ENCODE measurements at regions of chr16 and their contacts with region 1.

Region 1: DNA sequence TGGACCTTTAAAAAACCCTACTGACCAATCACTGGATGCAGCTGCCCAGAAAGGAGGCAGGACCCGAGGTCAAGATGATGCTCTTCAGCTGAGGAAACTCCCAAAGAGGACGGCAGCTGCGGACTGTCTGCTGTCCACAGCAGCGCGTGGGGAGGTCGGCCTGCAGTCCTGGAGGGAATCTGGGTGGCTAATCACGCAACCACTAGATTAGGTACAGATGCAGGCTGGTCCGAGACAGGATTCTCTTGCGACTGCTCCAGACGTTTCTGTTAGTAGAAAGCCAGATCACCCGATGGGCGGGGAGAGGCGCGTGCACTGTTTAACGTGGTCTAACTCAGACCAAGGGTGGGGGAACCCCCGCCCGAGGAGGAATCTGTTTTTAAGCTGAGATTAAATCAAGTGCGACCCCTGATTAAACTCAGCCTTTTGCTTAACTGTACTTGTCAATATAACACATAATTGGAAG is 8.8 kb downstream of the CTRB2 start:
- DNase-seq: peak; percentile 61
- H3K4me3 ChIP-seq: peak overlapping the region; percentile 22
- H3K27ac ChIP-seq: peak overlapping the region; percentile 21
- H3K27me3 ChIP-seq: peaks cover 8% of the 10 kb centered on the region
- CTCF ChIP-seq: no peak

Region 2: GRCh38 chr16:75219838-75220237 is 21.7 kb after region 1 on chr16:
- CTCF ChIA-PET with region 1: interaction called, 14 read pairs
- POLR2A ChIA-PET with region 1: no interaction called
- DNase-seq: no peak
- H3K4me3 ChIP-seq: no peak overlapping the region
- H3K27ac ChIP-seq: no peak overlapping the region
- H3K27me3 ChIP-seq: no peaks in the 10 kb centered on the region
- CTCF ChIP-seq: no peak

Region 3: GRCh38 chr16:75340741-75341491 is 142.7 kb after region 1 on chr16:
- CTCF ChIA-PET with region 1: interaction called, 12 read pairs
- POLR2A ChIA-PET with region 1: no interaction called
- DNase-seq: no peak
- H3K4me3 ChIP-seq: no peak overlapping the region
- H3K27ac ChIP-seq: no peak overlapping the region
- H3K27me3 ChIP-seq: no peaks in the 10 kb centered on the region
- CTCF ChIP-seq: no peak

Region 4: DNA sequence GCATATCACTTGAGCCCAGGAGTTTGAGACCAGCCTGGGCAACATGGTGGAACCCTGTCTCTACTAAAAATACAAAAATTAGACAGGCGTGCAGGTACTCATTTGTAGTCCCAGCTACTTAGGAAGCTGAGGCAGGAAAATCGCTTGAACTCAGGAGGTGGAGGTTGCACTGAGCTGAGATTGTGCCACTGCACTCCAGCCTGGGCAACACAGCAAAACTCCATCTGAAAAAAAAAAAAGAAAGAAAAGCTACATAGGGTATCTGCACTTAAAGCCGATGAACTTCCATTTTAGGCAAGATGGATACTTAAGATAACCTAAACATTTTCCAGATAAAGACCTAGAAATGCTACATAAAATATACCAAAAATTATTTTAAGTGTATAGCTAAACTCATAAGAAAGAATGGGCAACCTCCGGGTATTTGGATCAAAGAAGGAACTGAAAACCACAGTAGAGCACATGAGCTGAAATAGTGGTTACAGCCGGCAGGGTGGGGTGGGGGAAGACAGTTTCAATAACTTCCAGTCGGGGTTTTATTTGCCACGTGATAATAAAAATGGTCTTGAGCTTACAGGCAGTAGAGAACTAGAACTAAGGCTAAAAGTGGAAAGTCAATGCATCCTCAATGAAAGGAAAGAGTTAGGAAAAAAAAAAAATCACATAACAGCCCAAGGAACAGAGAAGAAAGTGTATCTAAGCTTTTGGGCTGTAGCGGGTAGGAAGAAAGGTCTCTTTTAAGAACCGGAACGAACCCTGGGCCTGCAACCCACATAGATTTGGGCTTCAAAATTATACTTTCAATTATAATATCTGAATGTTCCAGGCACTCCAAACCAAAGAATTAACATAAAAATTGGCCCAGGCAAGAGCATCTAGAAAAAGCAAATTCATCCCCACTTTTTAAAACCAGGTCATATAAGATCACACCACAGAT is 182.0 kb after region 1 on chr16:
- CTCF ChIA-PET with region 1: interaction called, 45 read pairs
- POLR2A ChIA-PET with region 1: no interaction called
- DNase-seq: no peak
- H3K4me3 ChIP-seq: no peak overlapping the region
- H3K27ac ChIP-seq: no peak overlapping the region
- H3K27me3 ChIP-seq: no peaks in the 10 kb centered on the region
- CTCF ChIP-seq: no peak

Region 5: DNA sequence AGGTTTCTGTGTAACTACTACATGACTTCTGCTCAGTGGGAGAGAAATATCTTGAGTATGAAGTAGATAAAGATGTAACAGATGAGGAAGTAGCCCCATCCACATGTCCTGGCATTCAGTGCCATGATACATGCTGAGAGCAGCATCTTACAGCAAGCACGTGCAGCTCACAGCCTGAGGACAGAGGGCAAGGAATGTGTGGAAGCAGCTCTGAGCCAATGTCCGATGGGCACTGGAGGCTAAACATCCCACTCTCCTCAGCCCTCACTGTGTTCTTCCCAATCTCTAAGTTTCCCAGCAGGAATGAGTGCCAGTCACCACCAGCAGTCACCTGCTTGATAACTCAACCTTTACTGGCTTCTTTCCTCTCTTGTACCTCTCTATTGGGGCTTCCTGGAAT is 194.7 kb after region 1 on chr16:
- CTCF ChIA-PET with region 1: interaction called, 21 read pairs
- POLR2A ChIA-PET with region 1: no interaction called
- DNase-seq: no peak
- H3K4me3 ChIP-seq: no peak overlapping the region
- H3K27ac ChIP-seq: no peak overlapping the region
- H3K27me3 ChIP-seq: no peaks in the 10 kb centered on the region
- CTCF ChIP-seq: no peak

Region 6: DNA sequence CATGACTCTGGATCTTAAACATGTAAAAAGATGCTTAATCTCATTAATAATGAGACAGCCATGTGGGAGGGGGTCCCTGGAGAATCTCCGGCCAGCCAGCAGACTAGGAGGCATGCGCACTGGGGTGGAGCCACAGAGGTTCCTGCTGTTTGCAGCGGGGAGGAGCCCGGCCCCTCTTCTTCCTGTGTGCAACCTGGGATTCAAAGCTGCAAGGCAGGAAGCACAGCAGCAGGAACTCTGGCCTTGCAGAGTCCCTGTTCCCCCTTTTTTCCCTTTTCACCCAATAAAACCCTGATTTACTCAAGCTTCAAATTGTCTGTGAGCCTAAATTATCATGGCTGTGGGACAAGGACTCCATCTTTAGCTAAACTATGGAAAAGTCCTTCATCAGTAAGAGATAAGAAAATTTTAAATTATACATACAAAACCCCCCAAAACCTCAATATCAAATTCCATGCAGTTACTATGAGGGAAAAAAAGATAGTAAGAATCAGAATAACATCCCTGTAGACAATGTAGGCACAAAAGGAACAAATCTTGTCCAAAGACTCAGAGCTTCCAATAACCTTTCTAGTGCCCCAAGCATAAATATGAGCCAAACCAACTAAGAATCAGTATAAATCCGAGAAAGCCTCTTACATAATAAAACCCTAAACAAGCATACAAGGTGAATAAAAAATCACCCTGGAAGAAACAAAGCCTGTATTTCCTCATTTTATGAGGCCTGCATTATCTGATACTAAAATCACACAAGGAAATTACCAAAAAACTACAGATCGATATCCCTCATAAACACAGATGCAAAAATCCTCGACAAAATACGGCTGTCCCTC is 223.0 kb after region 1 on chr16:
- CTCF ChIA-PET with region 1: interaction called, 21 read pairs
- POLR2A ChIA-PET with region 1: interaction called, 4 read pairs
- DNase-seq: no peak
- H3K4me3 ChIP-seq: no peak overlapping the region
- H3K27ac ChIP-seq: no peak overlapping the region
- H3K27me3 ChIP-seq: no peaks in the 10 kb centered on the region
- CTCF ChIP-seq: no peak

Region 7: DNA sequence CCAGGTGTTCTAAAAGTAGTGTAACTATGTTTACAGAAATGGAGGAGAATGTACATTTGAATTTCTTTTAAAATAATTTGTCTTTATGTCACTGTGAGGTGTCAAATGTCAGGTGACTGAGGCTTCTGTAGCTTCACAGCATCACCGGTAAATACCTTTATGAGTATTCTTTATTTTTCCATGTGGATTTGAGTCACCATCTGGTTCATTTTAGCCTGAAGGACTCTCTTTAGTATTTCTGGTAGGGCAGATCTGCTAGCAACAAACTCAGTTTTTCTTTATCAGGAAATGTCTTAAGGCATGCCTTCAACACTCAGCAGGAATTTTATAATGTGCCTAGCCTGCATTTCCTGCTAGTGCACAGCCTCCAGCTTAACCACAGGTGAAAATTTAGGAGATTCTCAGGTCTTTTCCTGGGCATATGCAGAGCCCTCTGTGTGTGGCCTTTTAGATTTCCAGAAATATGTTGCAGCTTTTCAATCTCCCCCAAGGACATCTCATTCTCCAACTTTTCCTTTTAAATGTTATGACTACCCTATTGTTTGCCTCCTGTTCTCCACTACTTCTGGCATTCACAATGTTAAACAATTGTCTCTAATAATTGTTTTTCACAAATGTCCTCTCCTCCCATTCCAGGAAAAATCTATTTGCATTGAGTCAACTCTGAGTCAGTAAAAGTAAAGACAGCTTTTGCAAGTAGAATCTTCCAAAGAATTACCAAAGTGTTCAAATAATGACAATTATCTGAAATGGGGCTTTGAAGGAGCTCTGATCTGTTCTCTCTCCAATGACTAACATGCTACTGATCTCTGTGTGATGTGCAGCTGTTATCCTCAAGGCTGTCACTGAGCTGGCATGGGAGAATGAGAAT is 767.6 kb after region 1 on chr16:
- CTCF ChIA-PET with region 1: no interaction called
- POLR2A ChIA-PET with region 1: no interaction called
- DNase-seq: no peak
- H3K4me3 ChIP-seq: no peak overlapping the region
- H3K27ac ChIP-seq: no peak overlapping the region
- H3K27me3 ChIP-seq: no peaks in the 10 kb centered on the region
- CTCF ChIP-seq: no peak